Activated B cell treated with CpG ODN at 0.5 μM for 24 hours (primary cell): ENCODE measurements at regions of chr1 and their contacts with region 1.

Region 1: GRCh38 chr1:243748706-243749283 is 101.2 kb downstream of the AKT3 start:
- DNase-seq: no peak
- ATAC-seq: peak; percentile 97
- H3K4me3 Mint-ChIP-seq: no peak overlapping the region
- H3K27ac Mint-ChIP-seq: no peak overlapping the region
- H3K4me1 Mint-ChIP-seq: peaks cover 2% of the 10 kb centered on the region
- H3K27me3 Mint-ChIP-seq: no peaks in the 10 kb centered on the region
- CTCF ChIP-seq: no peak

Region 2: DNA sequence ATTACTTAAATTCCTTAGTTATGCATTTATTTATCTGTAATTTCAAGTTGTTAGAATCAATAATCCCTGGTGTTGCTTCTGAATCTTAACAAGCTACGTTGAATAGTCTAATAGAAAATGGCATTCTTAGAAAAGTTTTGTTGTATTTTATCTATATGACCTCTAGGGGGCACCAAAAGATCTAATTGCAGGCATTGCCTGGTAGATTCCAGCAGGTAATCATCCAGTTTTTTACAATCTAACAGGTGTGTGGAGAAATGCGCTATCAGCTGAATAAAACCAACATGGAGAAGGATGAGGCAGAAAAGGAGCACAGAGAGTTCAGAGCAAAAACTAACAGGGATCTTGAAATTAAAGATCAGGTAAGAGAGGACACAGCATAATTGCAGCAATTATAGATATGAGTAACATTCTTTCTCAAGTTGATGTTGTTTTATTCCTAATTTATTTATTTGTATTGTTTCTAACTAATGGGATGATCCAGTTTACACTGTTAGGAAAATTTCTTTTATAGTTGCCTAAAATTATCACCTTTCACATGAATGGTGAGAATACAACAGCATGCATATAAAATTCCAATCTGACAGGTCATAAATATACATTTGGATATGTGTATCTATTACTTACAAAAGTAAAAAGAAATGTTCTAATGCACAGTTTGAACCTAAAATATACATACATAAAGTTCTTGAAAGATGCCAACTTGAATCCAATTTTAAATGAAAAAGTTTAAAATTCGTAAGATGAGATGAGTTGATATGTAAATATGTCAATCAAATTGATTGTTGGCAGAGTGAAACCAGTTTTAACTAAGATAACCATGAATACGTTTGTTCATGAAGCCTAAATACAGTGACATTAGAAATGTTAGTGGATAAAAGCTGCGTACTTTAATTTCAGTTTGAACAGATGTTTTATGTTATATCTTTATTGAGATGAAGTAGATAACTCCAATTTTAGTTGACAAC is 404.5 kb before region 1 on chr1:
- CTCF ChIA-PET with region 1: interaction called, 5 read pairs
- POLR2A ChIA-PET with region 1: no interaction called
- intact Hi-C with region 1: loop called (anchors 1 kb)
- DNase-seq: no peak
- ATAC-seq: no peak
- H3K4me3 Mint-ChIP-seq: no peak overlapping the region
- H3K27ac Mint-ChIP-seq: no peak overlapping the region
- H3K4me1 Mint-ChIP-seq: no peaks in the 10 kb centered on the region
- H3K27me3 Mint-ChIP-seq: no peaks in the 10 kb centered on the region
- CTCF ChIP-seq: peak; percentile 88

Region 3: GRCh38 chr1:243596431-243597062 is 152.2 kb before region 1 on chr1:
- CTCF ChIA-PET with region 1: no interaction called
- POLR2A ChIA-PET with region 1: no interaction called
- intact Hi-C with region 1: loop called (anchors 10 kb)
- DNase-seq: no peak
- ATAC-seq: peak; percentile 76
- H3K4me3 Mint-ChIP-seq: no peak overlapping the region
- H3K27ac Mint-ChIP-seq: peak overlapping the region; percentile 32
- H3K4me1 Mint-ChIP-seq: peaks cover 21% of the 10 kb centered on the region
- H3K27me3 Mint-ChIP-seq: no peaks in the 10 kb centered on the region
- CTCF ChIP-seq: no peak

Region 4: GRCh38 chr1:243727503-243728203 is 21.1 kb before region 1 on chr1:
- CTCF ChIA-PET with region 1: no interaction called
- POLR2A ChIA-PET with region 1: no interaction called
- intact Hi-C with region 1: loop called (anchors 2 kb)
- DNase-seq: peak; percentile 20
- ATAC-seq: peak; percentile 86
- H3K4me3 Mint-ChIP-seq: peak overlapping the region; percentile 39
- H3K27ac Mint-ChIP-seq: peak overlapping the region; percentile 76
- H3K4me1 Mint-ChIP-seq: peaks cover 55% of the 10 kb centered on the region
- H3K27me3 Mint-ChIP-seq: no peaks in the 10 kb centered on the region
- CTCF ChIP-seq: no peak

Region 5: DNA sequence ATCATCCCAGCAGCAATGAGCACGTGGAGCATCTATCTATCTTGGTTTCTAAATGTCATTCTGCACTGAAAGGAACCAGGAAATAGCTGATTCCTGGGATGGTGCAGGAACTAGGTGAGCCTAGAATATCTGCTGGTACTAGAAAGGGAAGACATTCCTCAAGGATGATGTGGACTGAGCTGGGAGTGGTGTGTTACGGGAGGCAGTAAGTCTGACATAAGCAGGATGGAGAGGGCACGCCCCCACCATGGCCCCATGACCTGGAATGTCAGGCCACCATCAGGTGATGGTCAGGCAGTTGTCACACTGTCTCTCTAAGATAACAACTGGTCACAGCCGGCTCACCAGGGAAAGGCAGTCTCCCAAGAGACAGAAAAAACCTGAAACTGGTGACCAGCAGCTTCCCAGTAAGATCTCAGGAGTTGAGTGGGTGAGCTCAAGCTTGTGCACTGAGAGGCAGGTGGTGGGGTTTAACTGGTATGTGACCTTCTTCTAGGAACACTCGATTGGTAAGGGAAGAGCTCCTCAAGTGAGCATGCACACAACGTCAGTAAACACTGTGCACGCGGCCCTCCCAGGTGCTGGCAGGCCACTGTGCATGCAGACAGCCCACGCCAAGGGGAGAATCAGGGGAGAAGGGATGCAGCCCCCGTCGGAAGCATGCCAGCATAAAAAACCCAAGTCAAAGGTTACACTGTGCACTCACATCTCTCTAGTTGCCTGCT is 554.3 kb after region 1 on chr1:
- CTCF ChIA-PET with region 1: no interaction called
- POLR2A ChIA-PET with region 1: no interaction called
- intact Hi-C with region 1: loop called (anchors 1 kb)
- DNase-seq: no peak
- ATAC-seq: no peak
- H3K4me3 Mint-ChIP-seq: no peak overlapping the region
- H3K27ac Mint-ChIP-seq: no peak overlapping the region
- H3K4me1 Mint-ChIP-seq: peaks cover 19% of the 10 kb centered on the region
- H3K27me3 Mint-ChIP-seq: no peaks in the 10 kb centered on the region
- CTCF ChIP-seq: no peak